ENCODE measurements at regions of chr6 and their contacts with region 1.

Region 1: DNA sequence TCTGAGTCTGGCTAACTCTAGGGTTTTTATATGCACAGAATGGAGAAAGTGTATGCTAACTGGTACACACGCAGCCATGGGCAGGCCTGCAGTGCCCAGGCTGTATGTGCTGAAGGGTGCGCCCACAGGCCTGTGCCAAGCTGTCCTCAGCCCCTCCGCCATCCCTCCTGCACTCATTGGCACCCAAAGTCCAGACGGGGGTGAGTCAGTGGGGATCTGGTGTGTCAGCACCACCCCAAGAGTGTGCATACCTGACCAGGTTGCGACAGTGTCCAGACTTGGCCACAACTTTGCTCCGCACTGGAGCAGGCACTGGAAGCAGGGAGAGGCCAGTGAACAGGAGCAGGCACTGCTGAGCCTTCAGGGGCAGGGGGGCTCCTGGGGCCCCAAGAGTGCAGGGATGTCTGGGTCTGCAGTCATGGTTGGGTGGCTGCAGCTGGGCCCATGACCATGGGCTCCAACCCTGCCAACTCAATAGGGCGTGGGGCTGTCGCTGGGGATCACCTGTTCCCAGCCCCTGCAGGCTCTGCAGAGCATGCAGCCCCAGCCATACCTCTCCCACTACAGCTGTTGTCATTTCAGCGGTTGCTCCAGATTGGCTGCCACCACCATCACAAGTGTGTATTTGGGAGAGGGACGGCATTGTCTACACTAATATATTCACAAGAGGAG is 717.8 kb downstream of the EPHA7 start:
- DNase-seq: no peak
- H3K4me3 ChIP-seq: no peak overlapping the region
- H3K27ac ChIP-seq: no peak overlapping the region
- H3K4me1 ChIP-seq: no peaks in the 10 kb centered on the region
- CTCF ChIP-seq: no peak

Region 2: GRCh38 chr6:92777146-92777740 is 75.7 kb after region 1 on chr6:
- CTCF ChIA-PET with region 1: no interaction called
- POLR2A ChIA-PET with region 1: interaction called, 10 read pairs
- intact Hi-C with region 1: no loop called
- DNase-seq: peak; percentile 57
- H3K4me3 ChIP-seq: no peak overlapping the region
- H3K27ac ChIP-seq: no peak overlapping the region
- H3K4me1 ChIP-seq: no peaks in the 10 kb centered on the region
- CTCF ChIP-seq: peak; percentile 84

Region 3: DNA sequence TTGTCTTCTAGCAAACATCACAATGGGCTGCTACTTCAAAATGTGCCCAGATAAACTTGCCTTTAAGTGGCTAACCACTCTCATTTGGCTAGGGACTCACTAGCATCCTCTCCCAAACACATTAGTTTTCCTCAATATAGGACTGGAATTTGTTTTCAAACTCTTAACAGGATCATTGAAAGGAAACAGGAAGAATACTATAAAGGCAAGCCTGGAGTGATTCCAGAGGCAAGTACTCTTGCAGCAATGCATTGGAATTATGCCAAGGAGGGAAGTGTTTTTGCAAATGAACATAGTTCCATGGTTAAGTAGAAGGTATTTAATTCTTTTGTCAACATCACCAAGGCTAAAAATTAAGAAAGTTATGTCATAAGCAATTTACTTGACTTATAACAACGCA is 705.6 kb after region 1 on chr6:
- CTCF ChIA-PET with region 1: no interaction called
- POLR2A ChIA-PET with region 1: no interaction called
- intact Hi-C with region 1: no loop called
- DNase-seq: no peak
- H3K4me3 ChIP-seq: no peak overlapping the region
- H3K27ac ChIP-seq: no peak overlapping the region
- H3K4me1 ChIP-seq: no peaks in the 10 kb centered on the region
- CTCF ChIP-seq: no peak

Measured in OCI-LY7 (cell line).